ENCODE measurements at regions of chr18 and their contacts with region 1.

Region 1: GRCh38 chr18:25351777-25352628 is at the start of gene ZNF521:
- DNase-seq: peak; percentile 89 to 90 (median 90)
- ATAC-seq: peak; percentile 83 to 93 (median 87)
- H3K4me3 ChIP-seq: peak within 1 kb of the TSS; percentile 52 to 89 (median 78)
- H3K27ac ChIP-seq: peak within 1 kb of the TSS; percentile 80 to 95 (median 91)
- H3K4me1 ChIP-seq: peaks cover 0 to 24% (median 7%) of the 10 kb centered on the region in 12 donors
- H3K27me3 ChIP-seq: peaks cover 0 to 31% (median 0%) of the 10 kb centered on the region in 9 donors
- CTCF ChIP-seq: peak in 8 of 12 donors; percentile 16 to 45 (median 30)
- POLR2A ChIP-seq: peak in 1 of 2 donors; percentile 68
- total RNA-seq, gene ZNF521: 12.2 to 24.4 (median 15.2) TPM

Region 2: GRCh38 chr18:24885276-24885675 is 466.7 kb before region 1 on chr18:
- intact Hi-C with region 1: loop called in 1 of 10 experiments (anchors 10 kb)
- DNase-seq: no peak
- ATAC-seq: no peak
- H3K4me3 ChIP-seq: no peak overlapping the region
- H3K27ac ChIP-seq: no peak overlapping the region
- H3K4me1 ChIP-seq: peaks cover 0 to 4% (median 0%) of the 10 kb centered on the region in 12 donors
- H3K27me3 ChIP-seq: no peaks in the 10 kb centered on the region
- CTCF ChIP-seq: no peak
- POLR2A ChIP-seq: no peak

Region 3: GRCh38 chr18:25136416-25137196 is 215.4 kb before region 1 on chr18:
- intact Hi-C with region 1: loop called in 4 of 10 experiments (anchors 5 to 10 kb)
- DNase-seq: peak in 3 of 5 donors; percentile 21 to 48 (median 23)
- ATAC-seq: peak; percentile 84 to 90 (median 88)
- H3K4me3 ChIP-seq: no peak overlapping the region
- H3K27ac ChIP-seq: peak overlapping the region; percentile 47 to 84 (median 67)
- H3K4me1 ChIP-seq: peaks cover 5 to 63% (median 44%) of the 10 kb centered on the region in 12 donors
- H3K27me3 ChIP-seq: no peaks in the 10 kb centered on the region
- CTCF ChIP-seq: peak in 1 of 12 donors; percentile 8
- POLR2A ChIP-seq: no peak

Region 4: GRCh38 chr18:25239581-25240419 is 112.2 kb before region 1 on chr18:
- intact Hi-C with region 1: loop called in 7 of 10 experiments (anchors 5 to 10 kb)
- DNase-seq: no peak
- ATAC-seq: peak in 2 of 4 donors; percentile 6 to 22
- H3K4me3 ChIP-seq: no peak overlapping the region
- H3K27ac ChIP-seq: peak overlapping the region in 2 of 12 donors; percentile 9 to 55
- H3K4me1 ChIP-seq: peaks cover 0 to 50% (median 15%) of the 10 kb centered on the region in 12 donors
- H3K27me3 ChIP-seq: no peaks in the 10 kb centered on the region
- CTCF ChIP-seq: no peak
- POLR2A ChIP-seq: no peak

Region 5: GRCh38 chr18:25420077-25420825 is 68.2 kb after region 1 on chr18:
- intact Hi-C with region 1: no loop called
- DNase-seq: no peak
- ATAC-seq: no peak
- H3K4me3 ChIP-seq: no peak overlapping the region
- H3K27ac ChIP-seq: no peak overlapping the region
- H3K4me1 ChIP-seq: peaks cover 0 to 7% (median 0%) of the 10 kb centered on the region in 12 donors
- H3K27me3 ChIP-seq: no peaks in the 10 kb centered on the region
- CTCF ChIP-seq: no peak
- POLR2A ChIP-seq: no peak

Region 6: GRCh38 chr18:25503567-25504081 is 151.6 kb after region 1 on chr18:
- intact Hi-C with region 1: loop called in 6 of 10 experiments (anchors 1 to 10 kb)
- DNase-seq: peak; percentile 46 to 64 (median 51)
- ATAC-seq: peak; percentile 93 to 98 (median 96)
- H3K4me3 ChIP-seq: peak overlapping the region; percentile 8 to 60 (median 45)
- H3K27ac ChIP-seq: peak overlapping the region in 3 of 12 donors; percentile 14 to 30 (median 18)
- H3K4me1 ChIP-seq: peaks cover 0 to 5% (median 0%) of the 10 kb centered on the region in 12 donors
- H3K27me3 ChIP-seq: no peaks in the 10 kb centered on the region
- CTCF ChIP-seq: no peak
- POLR2A ChIP-seq: no peak

Measured in heart left ventricle (tissue), 16 donors.